ENCODE measurements at regions of chr7 and their contacts with region 1.

Region 1: DNA sequence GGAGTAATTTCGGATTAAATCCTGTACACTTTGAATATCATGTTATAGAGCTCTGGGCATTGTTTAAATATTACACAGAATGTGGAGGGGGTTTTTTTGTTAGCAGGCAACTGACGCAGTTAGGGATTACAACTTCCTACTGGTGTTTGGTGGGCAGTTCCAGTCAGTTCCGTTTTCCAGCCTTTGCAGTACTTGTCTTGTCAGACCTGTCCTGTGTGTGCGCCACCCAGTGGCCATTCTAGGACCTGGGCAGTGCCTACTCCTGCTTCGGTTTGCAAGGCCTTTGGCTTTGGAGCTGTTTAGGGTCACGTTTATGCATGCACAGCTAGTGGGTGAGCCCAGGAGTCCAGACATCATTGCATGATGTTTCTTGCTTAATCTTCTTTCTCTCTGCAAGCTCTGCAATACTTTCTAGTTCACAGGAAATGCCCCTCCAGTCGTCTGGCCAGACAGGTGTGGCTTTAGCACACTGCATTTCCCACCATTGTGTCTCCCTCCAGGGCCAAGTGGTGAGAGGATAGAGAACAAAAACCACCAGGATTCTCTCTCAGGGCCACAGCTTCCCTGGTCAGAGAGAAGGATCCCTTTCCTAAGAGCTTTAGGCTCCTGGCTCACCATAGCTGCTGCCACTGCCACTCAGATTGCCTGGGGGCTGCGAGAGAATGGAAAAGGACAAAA is 96.5 kb upstream of the TARP start:
- DNase-seq: peak; percentile 53 to 77
- H3K4me3 ChIP-seq: no peak overlapping the region
- H3K27ac ChIP-seq: no peak overlapping the region
- H3K4me1 ChIP-seq: no peaks in the 10 kb centered on the region
- H3K27me3 ChIP-seq: no peaks in the 10 kb centered on the region
- CTCF ChIP-seq: peak; percentile 84

Region 2: GRCh38 chr7:37901236-37901827 is 468.6 kb before region 1 on chr7:
- CTCF ChIA-PET with region 1: no interaction called
- POLR2A ChIA-PET with region 1: no interaction called
- intact Hi-C with region 1: loop called (anchors 1 kb)
- DNase-seq: no peak
- H3K4me3 ChIP-seq: no peak overlapping the region
- H3K27ac ChIP-seq: no peak overlapping the region
- H3K4me1 ChIP-seq: no peaks in the 10 kb centered on the region
- H3K27me3 ChIP-seq: no peaks in the 10 kb centered on the region; the same call in 1 of the 2 replicates
- CTCF ChIP-seq: peak; percentile 83

Region 3: DNA sequence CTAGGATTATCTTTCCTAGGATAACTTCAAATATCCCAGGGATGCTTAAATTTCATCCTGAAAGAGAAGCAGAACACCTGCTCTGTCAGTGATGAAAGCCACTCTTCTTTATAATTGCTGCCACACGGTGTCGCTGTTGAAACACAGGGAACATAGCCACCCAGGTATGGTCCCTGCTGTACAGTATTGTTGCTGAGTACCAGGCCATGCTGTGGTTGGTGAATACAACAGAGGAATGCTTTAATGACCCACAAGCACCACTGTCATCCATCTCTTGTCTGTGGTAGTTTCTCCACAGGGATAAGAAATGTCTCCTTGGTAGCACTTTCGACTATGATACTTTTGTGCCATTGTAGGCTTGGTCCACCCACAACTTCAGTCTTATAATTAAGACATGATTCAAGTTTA is 262.5 kb before region 1 on chr7:
- CTCF ChIA-PET with region 1: interaction called, 3 read pairs
- POLR2A ChIA-PET with region 1: no interaction called
- intact Hi-C with region 1: loop called (anchors 2 kb)
- DNase-seq: peak; percentile 47 to 59
- H3K4me3 ChIP-seq: no peak overlapping the region
- H3K27ac ChIP-seq: no peak overlapping the region
- H3K4me1 ChIP-seq: no peaks in the 10 kb centered on the region
- H3K27me3 ChIP-seq: peaks cover 20% of the 10 kb centered on the region; the same call in 1 of the 2 replicates
- CTCF ChIP-seq: peak; percentile 90

Region 4: GRCh38 chr7:38558761-38559345 is 188.9 kb after region 1 on chr7:
- CTCF ChIA-PET with region 1: no interaction called
- POLR2A ChIA-PET with region 1: no interaction called
- intact Hi-C with region 1: no loop called
- DNase-seq: no peak
- H3K4me3 ChIP-seq: no peak overlapping the region
- H3K27ac ChIP-seq: no peak overlapping the region
- H3K4me1 ChIP-seq: no peaks in the 10 kb centered on the region
- H3K27me3 ChIP-seq: peaks cover 14% of the 10 kb centered on the region
- CTCF ChIP-seq: no peak

Measured in PC-9 (cell line).